Sigmoid colon (tissue), 7 donors: ENCODE measurements at regions of chr5 and their contacts with region 1.

Region 1: GRCh38 chr5:109421956-109422355 is 12.2 kb upstream of the PJA2 start:
- DNase-seq: no peak
- H3K4me3 ChIP-seq: no peak overlapping the region
- H3K27ac ChIP-seq: no peak overlapping the region
- H3K4me1 ChIP-seq: no peaks in the 10 kb centered on the region
- H3K27me3 ChIP-seq: no peaks in the 10 kb centered on the region
- CTCF ChIP-seq: no peak
- EP300 ChIP-seq: no peak
- POLR2A ChIP-seq: no peak

Region 2: DNA sequence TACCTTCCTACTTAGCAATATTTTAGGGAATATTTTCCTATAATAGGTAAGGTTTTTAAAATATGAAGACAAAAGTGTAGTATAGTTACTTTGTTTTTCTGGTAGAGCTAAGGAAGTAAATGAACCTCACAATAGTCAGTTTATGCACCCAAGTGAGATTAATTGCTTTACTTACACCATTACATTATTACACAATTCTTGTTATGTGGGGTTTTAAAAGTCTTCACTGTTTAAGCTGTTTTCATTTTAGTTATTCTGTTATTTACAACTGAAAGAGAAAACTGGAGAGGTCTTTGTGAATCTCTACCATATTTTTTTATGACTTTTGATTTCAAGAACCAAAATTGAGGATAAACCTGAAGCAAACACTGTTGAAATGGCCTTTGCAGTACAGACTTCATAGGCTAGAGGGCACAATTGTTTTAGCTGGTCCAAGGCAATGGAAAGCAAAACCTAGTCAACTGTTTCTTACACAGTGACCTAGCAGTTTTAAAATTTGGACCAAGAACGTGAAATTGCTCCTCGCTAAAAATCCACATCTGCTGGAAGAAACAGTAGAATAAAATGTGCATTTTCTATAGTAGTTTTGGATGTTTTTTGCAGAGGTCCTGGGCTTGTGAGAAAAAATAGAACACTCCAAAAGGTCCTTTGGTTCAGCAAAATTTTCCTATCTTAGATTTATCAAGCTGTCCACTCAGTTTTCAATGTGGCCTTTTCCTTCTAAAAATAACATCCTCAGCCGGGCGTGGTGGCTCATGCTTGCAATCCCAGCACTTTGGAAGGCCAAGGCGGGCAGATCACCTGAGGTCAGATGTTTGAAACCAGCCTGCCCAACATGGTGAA is 740.7 kb before region 1 on chr5:
- intact Hi-C with region 1: loop called (anchors 10 kb)
- DNase-seq: no peak
- H3K4me3 ChIP-seq: peak overlapping the region in 1 of 4 donors; percentile 28
- H3K27ac ChIP-seq: peak overlapping the region; percentile 44 to 75 (median 50)
- H3K4me1 ChIP-seq: no peaks in the 10 kb centered on the region
- H3K27me3 ChIP-seq: no peaks in the 10 kb centered on the region
- CTCF ChIP-seq: peak; percentile 69 to 90 (median 84)
- EP300 ChIP-seq: no peak
- POLR2A ChIP-seq: no peak

Region 3: GRCh38 chr5:109388407-109388806 is 33.5 kb before region 1 on chr5:
- intact Hi-C with region 1: no loop called
- DNase-seq: no peak
- H3K4me3 ChIP-seq: no peak overlapping the region
- H3K27ac ChIP-seq: peak overlapping the region in 1 of 4 donors; percentile 26
- H3K4me1 ChIP-seq: peaks cover 0 to 66% (median 54%) of the 10 kb centered on the region in 4 donors
- H3K27me3 ChIP-seq: no peaks in the 10 kb centered on the region
- CTCF ChIP-seq: no peak
- EP300 ChIP-seq: no peak
- POLR2A ChIP-seq: no peak